T-cell (primary cell): ENCODE measurements at regions of chr10 and their contacts with region 1.

Region 1: GRCh38 chr10:33134011-33134751 is 176.2 kb upstream of the ITGB1 start:
- DNase-seq: peak in 26 of 35 experiments; percentile 19 to 81 (median 41)
- ATAC-seq: peak; percentile 47 to 83 (median 79)
- H3K4me3 ChIP-seq: no peak overlapping the region
- H3K4me3 Mint-ChIP-seq: peak overlapping the region in 2 of 3 donors; percentile 28 to 34
- H3K27ac ChIP-seq: peak overlapping the region; percentile 89
- H3K27ac Mint-ChIP-seq: peak overlapping the region; percentile 90 to 92
- H3K4me1 ChIP-seq: peaks cover 15 to 86% of the 10 kb centered on the region in 2 experiments
- H3K4me1 Mint-ChIP-seq: peaks cover 66 to 94% (median 85%) of the 10 kb centered on the region in 3 donors
- H3K27me3 ChIP-seq: no peaks in the 10 kb centered on the region
- H3K27me3 Mint-ChIP-seq: no peaks in the 10 kb centered on the region

Region 2: DNA sequence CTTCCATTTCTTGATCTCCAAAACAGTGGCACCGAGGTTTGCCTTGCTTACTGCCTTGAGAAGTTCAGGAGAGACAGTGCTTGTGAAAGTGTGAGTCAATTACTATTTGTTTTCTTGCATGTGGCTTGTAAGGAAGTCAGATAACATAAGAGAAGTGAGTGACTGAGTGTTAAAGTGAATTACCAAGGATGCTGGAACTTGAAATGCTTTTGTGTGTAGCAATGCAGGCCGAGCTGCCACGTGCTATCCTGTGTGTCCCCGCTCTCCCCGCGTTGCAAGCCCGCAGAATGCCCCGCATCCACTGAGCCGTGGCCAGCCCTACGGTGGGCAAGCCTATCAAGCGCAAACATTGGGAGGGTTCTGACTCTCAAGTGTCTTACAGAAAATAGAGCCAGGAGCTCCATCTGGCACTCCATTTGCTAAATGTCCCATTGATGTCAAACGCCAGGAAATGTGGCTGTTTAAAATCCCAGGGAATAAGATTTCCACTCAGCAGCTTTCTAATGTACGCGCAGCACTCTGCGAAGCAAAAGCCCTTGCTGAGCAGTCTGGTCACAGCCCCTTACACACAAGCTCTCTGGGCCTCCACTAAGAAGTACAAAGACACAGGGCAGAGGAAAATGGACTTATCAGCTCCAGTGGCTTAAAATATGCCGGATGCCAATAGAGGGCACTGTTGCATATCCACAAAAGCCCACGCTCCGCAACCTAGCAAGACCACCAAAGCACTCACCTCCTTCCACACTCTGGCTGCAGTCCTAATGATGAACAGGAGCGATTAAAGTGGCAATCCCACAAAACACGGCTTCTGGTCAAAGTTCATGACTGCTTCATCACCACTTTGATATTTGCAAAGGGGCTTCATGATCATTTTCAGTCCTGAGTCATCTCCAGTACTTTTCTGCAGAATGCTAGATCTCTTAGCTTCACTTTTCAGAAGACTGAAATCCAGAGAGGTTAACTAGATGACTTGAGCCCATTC is 18.2 kb before region 1 on chr10:
- CTCF ChIA-PET with region 1: interaction called, 7 to 9 read pairs
- POLR2A ChIA-PET with region 1: interaction called, 7 to 12 read pairs
- DNase-seq: peak in 4 of 35 experiments; percentile 29 to 70 (median 31)
- ATAC-seq: peak; percentile 24 to 48 (median 38)
- H3K4me3 ChIP-seq: peak overlapping the region in 1 of 2 donors; percentile 28
- H3K4me3 Mint-ChIP-seq: peak overlapping the region; percentile 45 to 76 (median 64)
- H3K27ac ChIP-seq: peak overlapping the region; percentile 90
- H3K27ac Mint-ChIP-seq: peak overlapping the region; percentile 93 to 100
- H3K4me1 ChIP-seq: peaks cover 14 to 68% of the 10 kb centered on the region in 2 experiments
- H3K4me1 Mint-ChIP-seq: peaks cover 56 to 96% (median 89%) of the 10 kb centered on the region in 3 donors
- H3K27me3 ChIP-seq: no peaks in the 10 kb centered on the region
- H3K27me3 Mint-ChIP-seq: no peaks in the 10 kb centered on the region